ENCODE measurements at regions of chr7 and their contacts with region 1.

Region 1: GRCh38 chr7:150766334-150766709 is 29.1 kb downstream of the GIMAP5 start:
- DNase-seq: peak; percentile 28
- H3K4me3 ChIP-seq: no peak overlapping the region
- H3K27ac ChIP-seq: no peak overlapping the region
- H3K4me1 ChIP-seq: peaks cover 2% of the 10 kb centered on the region
- H3K27me3 ChIP-seq: no peaks in the 10 kb centered on the region
- CTCF ChIP-seq: no peak
- POLR2A ChIP-seq: no peak

Region 2: DNA sequence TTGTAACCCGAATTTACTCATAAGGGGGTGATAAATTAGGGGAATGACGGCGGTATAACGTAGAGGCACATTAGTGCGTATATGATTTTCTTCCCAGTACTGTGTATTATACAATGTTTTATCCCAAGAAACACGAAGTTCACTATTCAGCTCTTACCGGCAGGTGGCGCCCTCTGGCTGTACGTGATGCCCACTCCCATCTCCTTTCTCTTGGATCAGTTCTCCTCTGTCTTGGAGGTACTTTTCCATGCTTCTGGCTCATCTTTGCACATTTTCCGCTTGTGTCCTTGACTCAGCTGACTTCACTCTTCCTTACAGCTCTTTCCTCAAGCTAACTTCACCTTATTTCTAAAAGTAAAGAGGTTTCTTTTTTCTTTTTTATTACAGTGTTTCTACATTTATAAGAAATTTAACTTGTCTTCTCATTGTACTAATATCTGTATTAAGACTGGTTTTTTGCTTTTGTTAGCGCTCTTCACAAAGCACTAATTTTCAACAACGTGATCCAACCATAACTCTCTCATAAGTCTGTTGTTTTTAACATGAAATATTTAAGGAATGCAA is 12.5 kb after region 1 on chr7:
- CTCF ChIA-PET with region 1: interaction called, 30 read pairs
- POLR2A ChIA-PET with region 1: no interaction called
- dilution Hi-C with region 1: no loop called
- intact Hi-C with region 1: no loop called
- DNase-seq: peak; percentile 80
- H3K4me3 ChIP-seq: no peak overlapping the region
- H3K27ac ChIP-seq: no peak overlapping the region
- H3K4me1 ChIP-seq: no peaks in the 10 kb centered on the region
- H3K27me3 ChIP-seq: peaks cover 12 to 13% of the 10 kb centered on the region in 2 experiments
- CTCF ChIP-seq: peak; percentile 80 to 90
- POLR2A ChIP-seq: no peak

Region 3: GRCh38 chr7:151028131-151028947 is 262.0 kb after region 1 on chr7 and contains the start of gene ABCB8:
- CTCF ChIA-PET with region 1: no interaction called
- POLR2A ChIA-PET with region 1: no interaction called
- dilution Hi-C with region 1: no loop called
- intact Hi-C with region 1: no loop called
- DNase-seq: peak; percentile 99
- H3K4me3 ChIP-seq: peak within 1 kb of the TSS; percentile 66 to 88 (median 83)
- H3K27ac ChIP-seq: peak within 1 kb of the TSS; percentile 57
- H3K4me1 ChIP-seq: peaks cover 13% of the 10 kb centered on the region
- H3K27me3 ChIP-seq: no peaks in the 10 kb centered on the region
- CTCF ChIP-seq: peak; percentile 32 to 49
- POLR2A ChIP-seq: peak; percentile 73
- total RNA-seq, gene ABCB8: 46.3 and 48.5 TPM in 2 replicates